Activated CD4-positive, alpha-beta T cell treated with anti-CD3 and anti-CD28 coated beads for 36 hours (primary cell): ENCODE measurements at regions of chr10 and their contacts with region 1.

Region 1: GRCh38 chr10:451021-451471 is 238.4 kb downstream of the DIP2C start:
- DNase-seq: peak; percentile 77
- ATAC-seq: peak; percentile 96
- H3K4me3 Mint-ChIP-seq: peak overlapping the region; percentile 62
- H3K27ac Mint-ChIP-seq: peak overlapping the region; percentile 71
- H3K4me1 Mint-ChIP-seq: peaks cover 54% of the 10 kb centered on the region
- H3K27me3 Mint-ChIP-seq: peaks cover 2% of the 10 kb centered on the region

Region 2: DNA sequence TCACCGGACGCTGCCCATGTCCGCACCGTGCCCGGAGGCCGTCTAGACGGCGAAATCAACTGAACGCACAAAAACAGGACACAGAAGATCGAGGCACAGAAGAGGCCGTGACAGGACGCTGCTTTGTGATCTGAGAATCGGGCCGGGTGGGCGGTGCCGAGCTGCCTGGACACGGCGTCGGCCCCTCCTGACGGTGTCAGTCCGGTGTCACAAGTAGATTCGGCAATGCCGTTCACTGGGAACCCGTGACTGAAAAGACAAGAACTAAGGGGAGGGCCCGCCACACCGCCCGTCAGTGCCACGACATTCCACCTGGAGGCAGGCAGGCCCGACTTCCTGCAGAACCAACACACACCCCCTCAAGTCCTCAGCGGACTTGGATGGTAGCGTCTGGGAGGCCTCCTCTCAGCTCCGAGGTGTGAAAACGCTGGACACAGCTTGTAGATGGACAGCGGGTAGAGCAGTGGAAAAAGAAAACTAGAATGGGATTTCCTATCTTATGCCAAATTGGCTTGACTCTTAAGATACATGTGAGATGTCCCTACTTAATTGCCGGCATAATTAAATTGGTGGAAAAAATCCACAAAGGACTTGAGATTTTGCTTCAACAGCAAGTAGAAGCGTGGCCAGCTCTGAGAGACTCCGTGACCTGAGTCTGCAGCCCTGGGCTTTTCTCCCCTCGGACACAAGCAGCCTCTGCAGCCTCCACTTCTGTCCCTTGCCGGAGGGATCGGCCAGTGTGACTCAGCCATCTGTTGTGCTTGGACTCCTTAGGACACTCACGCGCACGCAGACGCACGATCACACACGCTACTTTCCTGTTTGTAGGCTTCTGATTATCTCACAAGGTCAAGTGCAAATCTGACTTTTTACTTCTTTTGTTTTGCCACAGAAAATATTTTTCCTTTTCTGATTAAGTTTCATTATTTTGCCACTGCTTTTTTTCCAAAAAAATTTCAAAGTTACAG is 30.6 kb before region 1 on chr10:
- CTCF ChIA-PET with region 1: no interaction called
- POLR2A ChIA-PET with region 1: no interaction called
- intact Hi-C with region 1: loop called in 1 of 2 experiments (anchors 2 kb)
- DNase-seq: no peak
- ATAC-seq: no peak
- H3K4me3 Mint-ChIP-seq: no peak overlapping the region
- H3K27ac Mint-ChIP-seq: no peak overlapping the region
- H3K4me1 Mint-ChIP-seq: no peaks in the 10 kb centered on the region
- H3K27me3 Mint-ChIP-seq: peaks cover 2% of the 10 kb centered on the region

Region 3: DNA sequence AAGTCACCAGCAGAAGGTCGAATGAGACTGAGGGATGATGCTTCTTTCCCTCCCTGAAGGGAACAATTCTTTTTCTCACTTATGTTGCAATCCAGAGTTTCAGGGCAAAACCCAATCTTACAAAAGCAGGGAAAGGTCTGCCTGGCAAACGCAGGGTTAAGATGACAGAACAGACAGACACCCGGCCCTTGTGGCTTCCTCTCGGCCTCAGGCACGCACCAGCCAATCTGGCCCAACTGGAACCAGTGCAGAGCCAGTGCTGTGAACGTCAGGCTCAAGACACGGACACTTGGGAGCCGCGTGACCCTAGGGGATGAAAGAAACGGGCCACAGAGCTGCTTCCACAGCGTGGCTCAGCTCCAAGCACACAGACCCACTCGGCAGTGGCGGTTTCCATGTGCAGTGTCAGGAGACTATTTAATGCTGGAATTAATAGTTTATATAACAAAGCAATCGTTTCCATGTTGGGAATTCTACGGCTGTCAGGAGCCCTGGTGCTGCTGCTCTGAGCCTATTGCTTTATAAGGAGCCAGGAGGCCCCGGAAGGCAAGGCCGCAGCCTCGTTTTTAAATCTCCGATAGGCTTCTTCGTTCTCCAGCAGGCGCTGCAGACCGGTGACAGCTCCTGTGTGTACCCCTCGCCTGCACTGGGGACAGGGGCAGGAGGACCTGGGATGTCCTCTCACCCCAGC is 40.0 kb after region 1 on chr10:
- CTCF ChIA-PET with region 1: no interaction called
- POLR2A ChIA-PET with region 1: no interaction called
- intact Hi-C with region 1: no loop called
- DNase-seq: no peak
- ATAC-seq: no peak
- H3K4me3 Mint-ChIP-seq: no peak overlapping the region
- H3K27ac Mint-ChIP-seq: no peak overlapping the region
- H3K4me1 Mint-ChIP-seq: peaks cover 1% of the 10 kb centered on the region
- H3K27me3 Mint-ChIP-seq: peaks cover 5% of the 10 kb centered on the region

Region 4: GRCh38 chr10:775245-776075 is 324.4 kb after region 1 on chr10:
- CTCF ChIA-PET with region 1: no interaction called
- POLR2A ChIA-PET with region 1: no interaction called
- intact Hi-C with region 1: no loop called
- DNase-seq: no peak
- ATAC-seq: no peak
- H3K4me3 Mint-ChIP-seq: no peak overlapping the region
- H3K27ac Mint-ChIP-seq: no peak overlapping the region
- H3K4me1 Mint-ChIP-seq: no peaks in the 10 kb centered on the region
- H3K27me3 Mint-ChIP-seq: no peaks in the 10 kb centered on the region